Stomach (tissue), 19 donors: ENCODE measurements at regions of chr12 and their contacts with region 1.

Region 1: GRCh38 chr12:69470189-69471075 is at the start of gene FRS2:
- DNase-seq: peak; percentile 92 to 97
- H3K4me3 ChIP-seq: peak within 1 kb of the TSS; percentile 66 to 96 (median 89)
- H3K27ac ChIP-seq: peak within 1 kb of the TSS; percentile 89 to 96 (median 93)
- H3K4me1 ChIP-seq: peaks cover 28 to 57% (median 46%) of the 10 kb centered on the region in 4 donors
- H3K27me3 ChIP-seq: no peaks in the 10 kb centered on the region
- CTCF ChIP-seq: peak in 1 of 7 experiments; percentile 12
- EP300 ChIP-seq: no peak
- POLR2A ChIP-seq: peak in 1 of 4 donors; percentile 64
- total RNA-seq, gene FRS2: 2.0 to 71.0 (median 31.7) TPM

Region 2: DNA sequence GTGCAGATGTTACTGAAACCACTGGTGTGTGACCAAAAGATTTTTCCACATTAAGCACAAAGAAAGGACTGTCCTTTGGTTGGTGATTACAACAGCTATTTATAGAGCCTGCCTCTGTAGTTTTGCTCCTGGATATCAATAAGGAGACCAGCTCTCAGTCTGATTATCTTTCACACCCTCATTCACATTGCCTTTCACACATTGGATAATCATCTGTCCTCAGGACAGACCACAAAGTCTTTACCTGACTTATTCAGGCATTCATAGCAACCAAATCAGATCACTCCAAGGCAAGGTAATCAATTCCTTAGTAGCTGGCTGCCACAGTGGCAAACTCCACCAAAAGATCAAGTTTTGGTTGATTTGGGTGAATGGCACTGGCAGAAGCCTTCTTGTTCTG is 290.6 kb before region 1 on chr12:
- intact Hi-C with region 1: no loop called
- DNase-seq: no peak
- H3K4me3 ChIP-seq: no peak overlapping the region
- H3K27ac ChIP-seq: no peak overlapping the region
- H3K4me1 ChIP-seq: no peaks in the 10 kb centered on the region
- H3K27me3 ChIP-seq: no peaks in the 10 kb centered on the region
- CTCF ChIP-seq: no peak
- EP300 ChIP-seq: no peak
- POLR2A ChIP-seq: no peak

Region 3: GRCh38 chr12:69534389-69534822 is 64.0 kb after region 1 on chr12:
- intact Hi-C with region 1: no loop called
- DNase-seq: peak in 1 of 2 donors; percentile 93
- H3K4me3 ChIP-seq: no peak overlapping the region
- H3K27ac ChIP-seq: peak overlapping the region in 4 of 5 donors; percentile 44 to 72 (median 52)
- H3K4me1 ChIP-seq: peaks cover 0 to 20% (median 10%) of the 10 kb centered on the region in 4 donors
- H3K27me3 ChIP-seq: no peaks in the 10 kb centered on the region
- CTCF ChIP-seq: no peak
- EP300 ChIP-seq: peak; percentile 23
- POLR2A ChIP-seq: no peak

Region 4: DNA sequence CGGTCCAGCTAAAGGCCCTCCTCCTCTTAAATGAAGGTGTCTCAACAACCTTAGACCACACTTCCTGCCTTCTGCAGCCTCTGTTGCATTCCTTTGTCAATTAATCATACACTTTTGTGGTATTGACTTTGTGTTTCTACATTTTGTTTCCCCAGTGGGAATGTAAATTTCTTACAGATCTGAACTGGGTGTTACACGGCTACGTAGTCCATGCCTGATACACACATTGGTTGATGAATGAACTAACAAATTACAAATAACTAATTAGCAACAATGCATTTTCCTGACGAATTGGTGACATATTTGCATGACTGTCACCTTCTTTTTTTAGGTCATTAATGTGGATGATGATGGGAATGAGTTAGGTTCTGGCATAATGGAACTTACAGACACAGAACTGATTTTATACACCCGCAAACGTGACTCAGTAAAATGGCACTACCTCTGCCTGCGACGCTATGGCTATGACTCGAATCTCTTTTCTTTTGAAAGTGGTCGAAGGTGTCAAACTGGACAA is 99.6 kb after region 1 on chr12:
- intact Hi-C with region 1: loop called (anchors 10 kb)
- DNase-seq: no peak
- H3K4me3 ChIP-seq: no peak overlapping the region
- H3K27ac ChIP-seq: no peak overlapping the region
- H3K4me1 ChIP-seq: peaks cover 0 to 20% (median 0%) of the 10 kb centered on the region in 4 donors
- H3K27me3 ChIP-seq: no peaks in the 10 kb centered on the region
- CTCF ChIP-seq: no peak
- EP300 ChIP-seq: no peak
- POLR2A ChIP-seq: no peak